CD4-positive, alpha-beta memory T cell (primary cell): ENCODE measurements at regions of chr3 and their contacts with region 1.

Region 1: DNA sequence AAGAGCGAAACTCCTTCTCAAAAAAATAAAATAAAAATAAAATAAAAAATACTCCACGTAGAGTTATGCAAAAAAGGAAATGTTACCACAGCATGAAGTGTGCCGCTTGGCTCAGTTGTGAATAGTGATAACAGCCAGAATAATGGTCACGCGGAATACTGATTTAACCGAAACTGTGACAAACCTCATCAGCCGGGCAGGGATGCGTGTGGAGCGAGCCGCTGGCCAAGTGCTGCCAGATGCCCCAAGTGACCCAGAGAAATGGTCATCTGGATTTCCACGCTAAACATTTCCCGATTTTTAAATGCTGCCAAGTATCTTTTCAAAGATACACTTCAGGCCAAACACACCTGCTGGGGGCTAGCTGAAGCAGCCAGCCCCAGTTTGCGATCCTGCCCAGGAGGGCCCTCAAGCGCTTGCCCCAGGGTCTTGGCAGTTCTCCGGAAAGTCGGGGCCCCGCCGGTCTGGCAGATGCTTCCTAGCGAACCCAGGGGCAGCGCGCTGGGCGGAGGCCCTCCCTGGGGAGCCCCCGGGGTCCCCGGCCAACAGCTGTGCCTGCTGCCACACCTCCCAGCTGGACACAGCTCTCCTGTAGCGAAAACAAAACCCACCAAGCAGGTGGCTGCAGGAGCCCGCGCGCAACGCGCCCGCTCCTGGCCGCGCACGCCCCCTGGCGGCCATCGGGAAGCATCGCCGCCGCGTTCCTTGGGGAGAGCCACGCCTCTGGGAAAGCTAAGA is 35.1 kb downstream of the CMTM6 start:
- DNase-seq: peak; percentile 65 to 82 (median 75)
- H3K4me3 ChIP-seq: peak overlapping the region in 1 of 2 donors; percentile 58
- H3K4me3 Mint-ChIP-seq: peak overlapping the region in 7 of 8 donors; percentile 22 to 69 (median 45)
- H3K27ac ChIP-seq: peak overlapping the region; percentile 52
- H3K27ac Mint-ChIP-seq: peak overlapping the region; percentile 29 to 81 (median 76)
- H3K4me1 ChIP-seq: peaks cover 40% of the 10 kb centered on the region
- H3K4me1 Mint-ChIP-seq: peaks cover 23 to 64% (median 48%) of the 10 kb centered on the region in 4 donors
- H3K27me3 ChIP-seq: no peaks in the 10 kb centered on the region
- H3K27me3 Mint-ChIP-seq: no peaks in the 10 kb centered on the region

Region 2: GRCh38 chr3:32285891-32286290 is 181.6 kb before region 1 on chr3:
- CTCF ChIA-PET with region 1: interaction called, 21 read pairs
- POLR2A ChIA-PET with region 1: no interaction called
- intact Hi-C with region 1: no loop called
- DNase-seq: peak in 1 of 5 donors; percentile 46
- H3K4me3 ChIP-seq: no peak overlapping the region
- H3K4me3 Mint-ChIP-seq: peak overlapping the region in 7 of 8 donors; percentile 6 to 74 (median 59)
- H3K27ac ChIP-seq: peak overlapping the region; percentile 31
- H3K27ac Mint-ChIP-seq: peak overlapping the region; percentile 68 to 90 (median 83)
- H3K4me1 ChIP-seq: peaks cover 53% of the 10 kb centered on the region
- H3K4me1 Mint-ChIP-seq: peaks cover 30 to 62% (median 43%) of the 10 kb centered on the region in 4 donors
- H3K27me3 ChIP-seq: no peaks in the 10 kb centered on the region
- H3K27me3 Mint-ChIP-seq: no peaks in the 10 kb centered on the region

Region 3: DNA sequence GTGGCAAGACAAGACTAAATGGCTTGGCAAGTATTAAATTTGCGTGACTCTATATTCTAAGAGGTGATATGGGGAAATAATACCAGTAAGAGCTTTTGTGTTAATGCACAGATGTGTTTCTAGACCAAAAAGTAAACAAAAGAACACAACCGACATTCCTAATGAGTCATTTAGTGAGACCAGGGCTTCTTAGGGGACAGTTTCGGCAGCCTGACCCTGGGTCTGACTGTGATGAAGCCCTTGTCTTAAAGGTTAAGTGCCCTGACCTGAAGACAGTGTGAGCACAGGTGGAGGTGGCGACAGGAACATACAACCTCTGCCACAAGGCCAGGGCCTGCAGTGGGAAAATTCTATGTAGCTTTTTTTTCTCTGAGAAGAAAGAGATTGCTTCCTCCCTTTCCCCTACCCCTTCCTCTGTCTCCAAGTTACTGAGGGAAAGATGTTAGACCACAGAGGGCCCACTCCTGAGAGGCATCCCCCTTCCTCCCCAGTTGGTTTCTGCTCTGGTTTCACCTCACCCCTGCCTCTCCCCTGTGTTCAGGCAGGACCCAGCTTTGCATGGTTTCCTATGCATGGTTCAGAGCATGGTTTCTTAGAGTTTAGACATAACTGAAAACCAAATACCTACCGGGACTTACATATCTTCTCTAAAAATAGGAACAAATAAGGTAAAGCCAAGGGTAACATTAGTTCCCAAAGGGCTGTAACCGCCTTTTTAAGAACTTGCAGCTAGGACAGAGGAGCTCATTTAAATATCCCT is 100.7 kb before region 1 on chr3:
- CTCF ChIA-PET with region 1: interaction called, 54 read pairs
- POLR2A ChIA-PET with region 1: interaction called, 11 read pairs
- intact Hi-C with region 1: no loop called
- DNase-seq: no peak
- H3K4me3 ChIP-seq: no peak overlapping the region
- H3K4me3 Mint-ChIP-seq: no peak overlapping the region
- H3K27ac ChIP-seq: no peak overlapping the region
- H3K27ac Mint-ChIP-seq: peak overlapping the region in 4 of 7 donors; percentile 25 to 81 (median 78)
- H3K4me1 ChIP-seq: peaks cover 11% of the 10 kb centered on the region
- H3K4me1 Mint-ChIP-seq: peaks cover 7 to 16% (median 11%) of the 10 kb centered on the region in 4 donors
- H3K27me3 ChIP-seq: no peaks in the 10 kb centered on the region
- H3K27me3 Mint-ChIP-seq: no peaks in the 10 kb centered on the region

Region 4: DNA sequence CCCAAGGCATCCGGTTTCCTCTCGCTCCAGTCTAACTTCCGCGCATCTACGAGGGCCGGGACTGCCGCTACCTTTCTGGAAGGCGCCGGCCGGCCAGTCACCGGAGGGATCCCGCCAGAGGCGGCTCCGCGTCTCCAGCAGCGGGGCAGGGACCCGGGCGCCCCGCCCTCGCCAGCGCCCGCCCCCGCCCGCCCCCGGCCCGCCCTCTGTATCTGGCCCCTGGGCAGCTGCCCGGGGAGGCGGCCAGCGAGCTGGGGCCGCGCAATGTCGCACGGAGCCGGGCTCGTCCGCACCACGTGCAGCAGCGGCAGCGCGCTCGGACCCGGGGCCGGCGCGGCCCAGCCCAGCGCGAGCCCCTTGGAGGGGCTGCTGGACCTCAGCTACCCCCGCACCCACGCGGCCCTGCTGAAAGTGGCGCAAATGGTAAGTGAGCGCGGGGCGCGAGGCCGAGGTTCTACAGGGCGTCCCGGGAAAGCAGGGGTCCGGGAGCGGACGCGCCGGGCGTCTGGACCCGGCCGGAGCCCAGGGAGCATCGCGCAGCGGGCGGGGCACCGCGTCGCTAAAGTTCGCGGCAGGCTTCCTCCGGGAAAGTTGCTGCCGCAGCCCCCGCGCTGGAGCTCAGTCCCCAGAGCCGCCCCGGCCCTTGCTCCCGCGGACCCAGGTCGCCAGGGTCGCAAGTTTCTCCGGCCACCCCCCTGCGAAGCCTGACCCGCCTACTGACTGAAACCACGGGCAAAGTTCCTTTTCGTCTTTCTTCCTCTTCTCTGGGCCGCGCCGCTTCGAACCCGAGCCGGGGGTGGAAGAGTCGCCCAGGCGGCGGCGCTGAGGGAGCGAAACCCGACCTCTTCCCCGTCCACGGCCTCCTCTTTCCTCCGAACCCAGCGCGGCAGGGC is 75.6 kb before region 1 on chr3 and contains the start of gene CMTM7:
- CTCF ChIA-PET with region 1: interaction called, 208 read pairs
- POLR2A ChIA-PET with region 1: interaction called, 37 read pairs
- intact Hi-C with region 1: no loop called
- DNase-seq: peak; percentile 57 to 81 (median 67)
- H3K4me3 ChIP-seq: peak within 1 kb of the TSS; percentile 63 to 75
- H3K4me3 Mint-ChIP-seq: peak within 1 kb of the TSS; percentile 95 to 99 (median 97)
- H3K27ac ChIP-seq: peak within 1 kb of the TSS; percentile 76
- H3K27ac Mint-ChIP-seq: peak within 1 kb of the TSS; percentile 95 to 98 (median 97)
- H3K4me1 ChIP-seq: peaks cover 57% of the 10 kb centered on the region
- H3K4me1 Mint-ChIP-seq: peaks cover 36 to 64% (median 46%) of the 10 kb centered on the region in 4 donors
- H3K27me3 ChIP-seq: no peaks in the 10 kb centered on the region
- H3K27me3 Mint-ChIP-seq: no peaks in the 10 kb centered on the region
- total RNA-seq, gene CMTM7: 44.2 to 48.0 TPM

Region 5: DNA sequence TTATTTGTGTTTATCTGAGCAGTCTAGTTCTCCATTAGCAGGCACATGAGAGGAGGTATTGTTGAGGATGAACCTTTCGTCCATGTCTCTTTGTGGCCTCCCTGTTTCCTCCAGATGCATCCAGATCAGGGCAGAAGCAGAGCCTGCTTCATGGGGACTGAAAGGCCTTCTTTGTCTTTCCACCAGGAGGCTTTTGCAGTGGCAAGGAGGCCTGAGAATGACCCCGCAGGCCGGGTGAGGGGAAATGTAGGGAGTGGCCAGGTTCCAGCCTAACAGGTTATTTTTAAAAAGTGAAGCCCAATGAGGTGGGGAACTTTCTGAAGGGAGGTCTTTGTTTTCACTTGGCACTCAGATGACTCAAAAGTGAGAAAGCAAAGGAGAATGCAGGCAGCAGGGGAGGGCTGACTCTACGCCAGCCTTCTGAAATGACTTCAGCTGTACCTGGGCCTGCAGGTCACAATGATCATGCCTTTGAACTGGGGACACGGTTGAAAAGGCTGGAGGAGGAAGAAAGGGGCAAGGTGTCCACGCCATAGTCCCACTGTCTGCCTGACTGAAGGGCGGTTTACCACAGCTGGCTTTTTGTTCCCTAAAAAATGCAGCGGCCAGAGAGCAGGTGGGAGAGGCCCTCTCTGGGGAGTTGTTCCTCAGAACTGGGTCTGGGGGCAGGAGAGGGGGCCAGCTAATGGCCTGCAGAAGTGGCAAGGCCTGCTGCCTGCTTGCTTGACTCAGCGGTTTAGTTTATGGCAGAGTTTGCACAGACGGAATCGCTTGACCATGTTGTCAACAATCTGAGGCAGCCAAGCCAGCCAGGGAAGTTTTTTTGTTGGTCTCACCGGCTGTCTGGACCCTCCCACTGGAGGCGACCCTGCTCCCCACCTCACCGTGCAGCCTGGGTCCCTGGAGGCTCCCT is 47.1 kb before region 1 on chr3:
- CTCF ChIA-PET with region 1: interaction called, 66 read pairs
- POLR2A ChIA-PET with region 1: interaction called, 415 read pairs
- intact Hi-C with region 1: no loop called
- DNase-seq: no peak
- H3K4me3 ChIP-seq: no peak overlapping the region
- H3K4me3 Mint-ChIP-seq: peak overlapping the region in 7 of 8 donors; percentile 31 to 76 (median 70)
- H3K27ac ChIP-seq: peak overlapping the region; percentile 18
- H3K27ac Mint-ChIP-seq: peak overlapping the region; percentile 3 to 96 (median 92)
- H3K4me1 ChIP-seq: peaks cover 94% of the 10 kb centered on the region
- H3K4me1 Mint-ChIP-seq: peaks cover 66 to 100% (median 89%) of the 10 kb centered on the region in 4 donors
- H3K27me3 ChIP-seq: no peaks in the 10 kb centered on the region
- H3K27me3 Mint-ChIP-seq: no peaks in the 10 kb centered on the region

Region 6: GRCh38 chr3:32484436-32484835 is 16.9 kb after region 1 on chr3:
- CTCF ChIA-PET with region 1: interaction called, 11 read pairs
- POLR2A ChIA-PET with region 1: interaction called, 4 read pairs
- intact Hi-C with region 1: no loop called
- DNase-seq: no peak
- H3K4me3 ChIP-seq: no peak overlapping the region
- H3K4me3 Mint-ChIP-seq: no peak overlapping the region
- H3K27ac ChIP-seq: no peak overlapping the region
- H3K27ac Mint-ChIP-seq: peak overlapping the region in 4 of 7 donors; percentile 13 to 84 (median 54)
- H3K4me1 ChIP-seq: peaks cover 3% of the 10 kb centered on the region
- H3K4me1 Mint-ChIP-seq: peaks cover 22 to 39% (median 27%) of the 10 kb centered on the region in 4 donors
- H3K27me3 ChIP-seq: no peaks in the 10 kb centered on the region
- H3K27me3 Mint-ChIP-seq: no peaks in the 10 kb centered on the region